ENCODE measurements at regions of chr18 and their contacts with region 1.

Region 1: GRCh38 chr18:13375302-13376255 is 157.0 kb downstream of the LDLRAD4 start:
- DNase-seq: peak in 7 of 9 donors; percentile 29 to 81 (median 54)
- ATAC-seq: peak; percentile 77
- H3K4me3 ChIP-seq: peak overlapping the region; percentile 34
- H3K4me3 Mint-ChIP-seq: peak overlapping the region; percentile 56 to 86 (median 78)
- H3K27ac ChIP-seq: peak overlapping the region; percentile 83
- H3K27ac Mint-ChIP-seq: peak overlapping the region; percentile 92 to 99 (median 96)
- H3K4me1 ChIP-seq: peaks cover 10 to 64% of the 10 kb centered on the region in 2 donors
- H3K4me1 Mint-ChIP-seq: peaks cover 32 to 85% (median 77%) of the 10 kb centered on the region in 7 donors
- H3K27me3 ChIP-seq: no peaks in the 10 kb centered on the region
- H3K27me3 Mint-ChIP-seq: no peaks in the 10 kb centered on the region

Region 2: DNA sequence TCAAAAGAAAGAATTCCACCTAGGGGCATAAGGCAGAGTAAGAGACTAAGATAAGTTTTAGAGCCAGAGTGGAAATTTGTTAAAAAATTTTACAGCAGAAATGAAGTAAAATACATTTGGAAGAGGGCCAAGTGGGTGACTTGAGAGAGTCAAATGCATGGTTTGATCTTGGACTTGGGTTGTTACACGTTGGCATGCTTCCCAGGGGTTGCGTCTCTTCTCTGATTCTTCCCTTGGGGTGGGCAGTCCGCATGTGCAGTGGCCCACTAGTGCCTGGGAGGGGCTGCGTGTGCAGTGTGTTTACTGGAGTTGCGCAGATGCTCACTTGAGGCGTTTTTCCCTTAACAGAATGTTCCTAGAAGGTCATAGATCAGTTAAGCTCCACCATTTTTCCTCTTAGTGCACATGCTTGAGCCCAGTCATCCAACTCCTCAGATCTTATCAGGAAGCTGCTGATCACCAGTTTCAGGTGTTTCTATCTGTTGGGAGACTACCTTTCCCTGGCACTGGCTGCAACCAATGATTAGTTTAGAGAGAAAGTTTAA is 414.7 kb before region 1 on chr18:
- CTCF ChIA-PET with region 1: no interaction called
- POLR2A ChIA-PET with region 1: no interaction called
- intact Hi-C with region 1: no loop called
- DNase-seq: no peak
- ATAC-seq: no peak
- H3K4me3 ChIP-seq: no peak overlapping the region
- H3K4me3 Mint-ChIP-seq: no peak overlapping the region
- H3K27ac ChIP-seq: no peak overlapping the region
- H3K27ac Mint-ChIP-seq: peak overlapping the region in 1 of 9 donors; percentile 60
- H3K4me1 ChIP-seq: no peaks in the 10 kb centered on the region
- H3K4me1 Mint-ChIP-seq: peaks cover 11 to 24% (median 16%) of the 10 kb centered on the region in 7 donors
- H3K27me3 ChIP-seq: no peaks in the 10 kb centered on the region
- H3K27me3 Mint-ChIP-seq: no peaks in the 10 kb centered on the region

Region 3: DNA sequence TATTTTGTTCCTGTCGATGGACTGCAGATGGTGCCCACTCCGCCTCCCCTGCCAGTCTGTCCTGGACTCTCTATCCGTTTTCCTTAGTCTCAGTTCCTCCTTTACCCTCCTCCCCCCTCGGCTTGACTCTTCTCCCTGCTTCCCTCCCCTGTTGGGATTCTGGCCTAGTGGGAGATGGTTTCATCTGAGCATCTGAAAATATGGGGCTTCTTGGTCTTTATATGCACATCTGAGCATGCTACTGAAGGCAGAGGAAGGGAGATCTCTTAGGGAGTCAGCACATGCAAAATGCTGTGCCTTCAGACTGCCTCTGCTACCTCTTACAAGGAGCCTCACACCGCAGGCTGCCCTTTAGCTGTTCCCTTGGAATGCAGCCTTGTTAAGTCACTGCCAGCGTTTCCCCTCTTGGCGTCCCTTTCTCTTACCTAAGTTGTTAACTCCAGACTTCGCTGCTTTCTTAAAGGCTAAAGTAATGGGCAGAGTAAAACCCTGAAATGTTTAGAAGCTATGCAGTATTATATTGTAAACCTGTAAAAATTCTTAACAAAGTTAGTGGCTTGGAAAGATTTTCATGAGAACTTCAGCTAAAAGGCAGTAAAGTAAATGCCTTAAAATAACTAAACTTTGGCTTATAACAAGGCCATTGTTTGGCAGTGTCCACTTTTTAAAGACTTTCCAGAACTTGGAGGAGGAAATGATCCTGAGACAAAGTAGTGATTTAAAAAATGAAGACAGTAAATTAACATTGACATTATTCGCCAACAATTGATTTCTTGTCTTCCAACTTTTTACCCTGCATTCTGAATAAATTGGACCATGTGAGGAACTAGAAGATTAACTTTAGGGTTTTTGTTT is 107.2 kb before region 1 on chr18:
- CTCF ChIA-PET with region 1: no interaction called
- POLR2A ChIA-PET with region 1: interaction called, 4 read pairs
- intact Hi-C with region 1: loop called (anchors 2 to 5 kb)
- DNase-seq: no peak
- ATAC-seq: no peak
- H3K4me3 ChIP-seq: no peak overlapping the region
- H3K4me3 Mint-ChIP-seq: peak overlapping the region in 8 of 10 donors; percentile 3 to 68 (median 26)
- H3K27ac ChIP-seq: no peak overlapping the region
- H3K27ac Mint-ChIP-seq: peak overlapping the region in 8 of 9 donors; percentile 65 to 89 (median 83)
- H3K4me1 ChIP-seq: peaks cover 0 to 49% of the 10 kb centered on the region in 2 donors
- H3K4me1 Mint-ChIP-seq: peaks cover 24 to 84% (median 65%) of the 10 kb centered on the region in 7 donors
- H3K27me3 ChIP-seq: no peaks in the 10 kb centered on the region
- H3K27me3 Mint-ChIP-seq: peaks cover 0 to 4% (median 0%) of the 10 kb centered on the region in 5 donors

Region 4: DNA sequence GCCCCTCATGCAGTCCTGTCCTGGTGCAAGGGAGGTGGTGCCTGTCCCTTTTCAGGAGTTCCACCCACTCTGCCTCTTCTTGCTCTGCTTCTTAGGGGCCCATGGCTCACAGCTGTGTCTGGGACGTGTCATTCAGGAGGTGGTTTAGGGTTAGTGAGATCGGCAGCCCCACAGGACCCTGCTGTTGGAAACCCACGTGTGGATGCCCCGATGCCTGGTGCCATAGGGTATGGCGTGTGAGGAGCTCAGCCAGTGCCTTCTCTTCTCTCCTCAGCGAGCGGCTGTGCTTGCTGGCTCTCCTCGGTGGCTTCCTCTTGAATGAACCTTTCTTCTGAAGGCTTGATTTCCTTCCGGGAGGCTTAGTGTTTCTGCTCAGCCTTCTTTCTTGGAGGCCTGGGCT is 101.8 kb before region 1 on chr18:
- CTCF ChIA-PET with region 1: no interaction called
- POLR2A ChIA-PET with region 1: interaction called, 4 read pairs
- intact Hi-C with region 1: loop called (anchors 2 to 5 kb)
- DNase-seq: peak in 7 of 9 donors; percentile 32 to 59 (median 58)
- ATAC-seq: peak; percentile 71
- H3K4me3 ChIP-seq: peak overlapping the region; percentile 60
- H3K4me3 Mint-ChIP-seq: peak overlapping the region; percentile 70 to 90 (median 84)
- H3K27ac ChIP-seq: peak overlapping the region; percentile 71
- H3K27ac Mint-ChIP-seq: peak overlapping the region; percentile 85 to 94 (median 92)
- H3K4me1 ChIP-seq: peaks cover 0 to 34% of the 10 kb centered on the region in 2 donors
- H3K4me1 Mint-ChIP-seq: peaks cover 23 to 86% (median 63%) of the 10 kb centered on the region in 7 donors
- H3K27me3 ChIP-seq: no peaks in the 10 kb centered on the region
- H3K27me3 Mint-ChIP-seq: no peaks in the 10 kb centered on the region

Region 5: GRCh38 chr18:13313006-13313686 is 62.4 kb before region 1 on chr18:
- CTCF ChIA-PET with region 1: interaction called, 3 read pairs
- POLR2A ChIA-PET with region 1: no interaction called
- intact Hi-C with region 1: loop called in 1 of 2 experiments (anchors 1 kb)
- DNase-seq: peak in 7 of 9 donors; percentile 41 to 74 (median 67)
- ATAC-seq: peak; percentile 79
- H3K4me3 ChIP-seq: no peak overlapping the region
- H3K4me3 Mint-ChIP-seq: peak overlapping the region; percentile 51 to 81 (median 68)
- H3K27ac ChIP-seq: peak overlapping the region; percentile 48
- H3K27ac Mint-ChIP-seq: peak overlapping the region; percentile 70 to 97 (median 89)
- H3K4me1 ChIP-seq: peaks cover 0 to 17% of the 10 kb centered on the region in 2 donors
- H3K4me1 Mint-ChIP-seq: peaks cover 21 to 55% (median 42%) of the 10 kb centered on the region in 7 donors
- H3K27me3 ChIP-seq: no peaks in the 10 kb centered on the region
- H3K27me3 Mint-ChIP-seq: no peaks in the 10 kb centered on the region

Region 6: GRCh38 chr18:13336841-13337240 is 38.7 kb before region 1 on chr18:
- CTCF ChIA-PET with region 1: no interaction called
- POLR2A ChIA-PET with region 1: no interaction called
- intact Hi-C with region 1: loop called in 1 of 2 experiments (anchors 5 kb)
- DNase-seq: no peak
- ATAC-seq: no peak
- H3K4me3 ChIP-seq: no peak overlapping the region
- H3K4me3 Mint-ChIP-seq: peak overlapping the region in 2 of 10 donors; percentile 3 to 61
- H3K27ac ChIP-seq: no peak overlapping the region
- H3K27ac Mint-ChIP-seq: peak overlapping the region in 3 of 9 donors; percentile 4 to 46 (median 31)
- H3K4me1 ChIP-seq: no peaks in the 10 kb centered on the region
- H3K4me1 Mint-ChIP-seq: peaks cover 3 to 39% (median 29%) of the 10 kb centered on the region in 7 donors
- H3K27me3 ChIP-seq: no peaks in the 10 kb centered on the region
- H3K27me3 Mint-ChIP-seq: peaks cover 0 to 13% (median 0%) of the 10 kb centered on the region in 5 donors

Region 7: GRCh38 chr18:13353084-13353823 is 22.3 kb before region 1 on chr18:
- CTCF ChIA-PET with region 1: no interaction called
- POLR2A ChIA-PET with region 1: interaction called, 5 read pairs
- intact Hi-C with region 1: loop called in 1 of 2 experiments (anchors 1 kb)
- DNase-seq: peak in 6 of 9 donors; percentile 16 to 41 (median 32)
- ATAC-seq: peak; percentile 77
- H3K4me3 ChIP-seq: no peak overlapping the region
- H3K4me3 Mint-ChIP-seq: peak overlapping the region; percentile 13 to 70 (median 64)
- H3K27ac ChIP-seq: peak overlapping the region; percentile 45
- H3K27ac Mint-ChIP-seq: peak overlapping the region; percentile 63 to 97 (median 89)
- H3K4me1 ChIP-seq: peaks cover 0 to 16% of the 10 kb centered on the region in 2 donors
- H3K4me1 Mint-ChIP-seq: peaks cover 11 to 36% (median 29%) of the 10 kb centered on the region in 7 donors
- H3K27me3 ChIP-seq: no peaks in the 10 kb centered on the region
- H3K27me3 Mint-ChIP-seq: no peaks in the 10 kb centered on the region

Measured in naive thymus-derived CD4-positive, alpha-beta T cell (primary cell).